IMR-90 (cell line): ENCODE measurements at regions of chr3 and their contacts with region 1.

Region 1: GRCh38 chr3:157532529-157533297 is 29.5 kb upstream of the VEPH1 start:
- DNase-seq: peak; percentile 92
- ATAC-seq: peak; percentile 73
- H3K4me3 ChIP-seq: peak overlapping the region; percentile 27; the same call in 1 of the 2 replicates
- H3K27ac ChIP-seq: peak overlapping the region; percentile 86
- H3K4me1 ChIP-seq: peaks cover 25% of the 10 kb centered on the region
- H3K27me3 ChIP-seq: no peaks in the 10 kb centered on the region
- CTCF ChIP-seq: peak; percentile 86
- POLR2A ChIP-seq: no peak
- RAD21 ChIP-seq: peak; percentile 83

Region 2: DNA sequence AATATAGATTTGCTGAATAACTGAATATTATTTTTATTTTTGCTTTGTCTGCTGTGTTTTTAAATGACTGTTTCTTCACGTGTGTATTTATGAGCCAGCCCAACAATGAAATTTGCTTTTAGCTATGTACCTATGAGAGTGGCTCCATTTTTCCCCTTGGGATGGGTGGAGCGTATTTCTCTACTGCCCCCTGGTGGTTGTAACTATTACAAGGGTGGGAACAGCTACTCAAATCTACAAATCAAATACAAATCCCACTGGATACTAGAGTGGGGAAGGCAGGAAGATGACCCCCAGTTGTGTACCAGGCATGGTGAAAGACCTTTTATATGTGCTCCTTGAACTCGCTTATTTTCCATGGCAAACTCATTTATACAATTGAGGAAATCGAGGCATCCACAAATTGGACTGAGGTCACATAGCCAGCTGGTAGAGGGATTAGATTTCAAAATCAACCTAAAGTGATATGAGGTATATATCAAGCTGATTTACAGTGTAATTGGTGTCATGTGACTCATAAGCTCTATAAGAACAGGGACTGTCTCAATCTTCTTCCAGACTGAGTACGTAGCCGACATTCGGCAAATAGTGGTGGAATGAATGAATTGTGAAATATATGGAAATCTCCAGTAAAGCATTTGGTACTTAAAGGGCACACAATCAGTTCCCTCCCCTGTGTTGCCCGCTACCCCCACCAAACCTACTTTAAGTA is 40.0 kb after region 1 on chr3:
- CTCF ChIA-PET with region 1: interaction called, 65 read pairs
- POLR2A ChIA-PET with region 1: interaction called, 8 read pairs
- dilution Hi-C with region 1: no loop called
- in situ Hi-C with region 1: no loop called
- intact Hi-C with region 1: loop called (anchors 1 kb)
- DNase-seq: peak; percentile 64
- ATAC-seq: peak; percentile 84
- H3K4me3 ChIP-seq: no peak overlapping the region
- H3K27ac ChIP-seq: no peak overlapping the region
- H3K4me1 ChIP-seq: no peaks in the 10 kb centered on the region; the same call in 1 of the 2 replicates
- H3K27me3 ChIP-seq: no peaks in the 10 kb centered on the region; the same call in 1 of the 2 replicates
- CTCF ChIP-seq: peak; percentile 72
- POLR2A ChIP-seq: no peak
- RAD21 ChIP-seq: peak; percentile 66

Region 3: DNA sequence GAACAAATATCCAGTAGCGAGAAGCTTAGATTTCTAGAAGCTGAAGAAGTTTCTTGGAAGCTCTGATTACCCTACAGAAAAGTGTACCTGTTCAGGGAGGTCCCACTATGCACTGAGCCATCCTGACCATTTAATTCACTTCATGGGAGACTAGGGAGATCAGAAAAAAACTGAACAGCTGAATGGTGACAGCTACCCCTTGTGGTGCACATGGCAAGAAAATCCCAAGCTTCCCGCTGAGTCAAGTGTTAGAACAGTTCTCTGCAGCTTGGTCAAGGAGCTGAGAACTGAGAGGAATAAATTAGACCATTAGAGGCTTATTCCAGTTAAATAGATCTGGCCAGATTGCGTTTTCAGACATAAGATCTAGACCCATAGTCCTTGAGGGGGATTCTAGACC is 167.7 kb after region 1 on chr3:
- CTCF ChIA-PET with region 1: no interaction called
- POLR2A ChIA-PET with region 1: no interaction called
- dilution Hi-C with region 1: no loop called
- in situ Hi-C with region 1: no loop called
- intact Hi-C with region 1: no loop called
- DNase-seq: peak; percentile 1
- ATAC-seq: no peak
- H3K4me3 ChIP-seq: no peak overlapping the region
- H3K27ac ChIP-seq: no peak overlapping the region
- H3K4me1 ChIP-seq: no peaks in the 10 kb centered on the region
- H3K27me3 ChIP-seq: peaks cover 4% of the 10 kb centered on the region; the same call in 1 of the 2 replicates
- CTCF ChIP-seq: no peak
- POLR2A ChIP-seq: no peak
- RAD21 ChIP-seq: no peak

Region 4: DNA sequence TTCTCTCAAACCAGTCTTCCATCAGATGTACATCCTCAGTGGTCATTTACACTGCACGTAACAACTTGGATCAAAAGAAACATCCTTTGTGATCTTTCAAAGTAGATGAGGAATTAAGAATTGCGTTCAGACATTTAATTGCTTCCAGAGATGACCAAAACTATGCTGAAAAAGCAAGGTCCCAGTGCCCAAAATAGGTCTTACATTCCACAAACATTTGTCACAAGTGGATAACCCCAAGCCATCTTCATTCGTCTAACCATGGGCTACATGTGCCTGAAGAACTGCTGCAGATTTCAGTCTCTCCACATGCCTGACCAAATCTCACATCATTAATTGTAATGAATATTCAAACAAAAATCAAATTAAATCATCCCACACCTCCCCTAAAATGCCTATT is 299.9 kb after region 1 on chr3:
- CTCF ChIA-PET with region 1: no interaction called
- POLR2A ChIA-PET with region 1: no interaction called
- dilution Hi-C with region 1: no loop called
- in situ Hi-C with region 1: no loop called
- intact Hi-C with region 1: no loop called
- DNase-seq: no peak
- ATAC-seq: no peak
- H3K4me3 ChIP-seq: no peak overlapping the region
- H3K27ac ChIP-seq: no peak overlapping the region
- H3K4me1 ChIP-seq: no peaks in the 10 kb centered on the region
- H3K27me3 ChIP-seq: peaks cover 4% of the 10 kb centered on the region; the same call in 1 of the 2 replicates
- CTCF ChIP-seq: no peak
- POLR2A ChIP-seq: no peak
- RAD21 ChIP-seq: no peak

Region 5: DNA sequence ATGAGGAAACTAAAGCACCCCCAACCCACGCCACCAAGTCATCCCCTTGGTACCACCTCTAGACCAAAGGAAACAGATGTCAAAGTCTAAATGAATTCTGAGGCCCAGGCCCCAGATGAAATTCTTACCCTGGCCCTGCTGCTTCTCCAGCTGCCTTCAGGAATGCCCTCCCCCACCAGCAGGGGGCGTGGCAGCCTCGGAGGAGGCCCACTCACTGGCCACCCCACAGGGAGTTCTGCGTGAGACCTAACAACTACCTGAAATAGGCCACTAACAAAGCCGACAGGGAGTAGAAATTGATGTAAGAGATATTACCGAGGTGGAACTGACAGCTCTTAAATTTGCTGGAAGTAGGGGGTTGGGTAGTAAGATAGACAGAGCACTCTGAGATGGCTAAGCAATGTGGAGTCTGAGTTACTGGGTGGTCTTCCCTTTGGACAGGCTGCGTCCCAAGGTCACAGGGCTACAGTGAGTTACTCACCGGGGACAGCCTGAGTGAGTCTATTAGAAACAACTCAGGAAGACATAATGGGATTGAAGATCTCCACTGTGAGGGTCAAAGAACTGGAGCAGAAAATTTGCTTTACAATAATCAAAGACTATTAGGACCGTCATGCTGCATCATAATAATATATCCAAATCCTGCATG is 332.8 kb after region 1 on chr3:
- CTCF ChIA-PET with region 1: no interaction called
- POLR2A ChIA-PET with region 1: no interaction called
- dilution Hi-C with region 1: no loop called
- in situ Hi-C with region 1: no loop called
- intact Hi-C with region 1: no loop called
- DNase-seq: no peak
- ATAC-seq: no peak
- H3K4me3 ChIP-seq: no peak overlapping the region
- H3K27ac ChIP-seq: no peak overlapping the region
- H3K4me1 ChIP-seq: no peaks in the 10 kb centered on the region
- H3K27me3 ChIP-seq: no peaks in the 10 kb centered on the region
- CTCF ChIP-seq: peak; percentile 43
- POLR2A ChIP-seq: no peak
- RAD21 ChIP-seq: peak; percentile 52

Region 6: GRCh38 chr3:157913741-157914150 is 381.0 kb after region 1 on chr3:
- CTCF ChIA-PET with region 1: no interaction called
- POLR2A ChIA-PET with region 1: no interaction called
- dilution Hi-C with region 1: no loop called
- in situ Hi-C with region 1: no loop called
- intact Hi-C with region 1: loop called (anchors 2 kb)
- DNase-seq: peak; percentile 15
- ATAC-seq: peak; percentile 54
- H3K4me3 ChIP-seq: no peak overlapping the region
- H3K27ac ChIP-seq: peak overlapping the region; percentile 72; the same call in 1 of the 2 replicates
- H3K4me1 ChIP-seq: peaks cover 7% of the 10 kb centered on the region
- H3K27me3 ChIP-seq: no peaks in the 10 kb centered on the region
- CTCF ChIP-seq: no peak
- POLR2A ChIP-seq: no peak
- RAD21 ChIP-seq: no peak

Region 7: GRCh38 chr3:158109804-158110657 is 577.3 kb after region 1 on chr3 and contains the start of gene RSRC1:
- CTCF ChIA-PET with region 1: no interaction called
- POLR2A ChIA-PET with region 1: interaction called, 12 read pairs
- dilution Hi-C with region 1: no loop called
- in situ Hi-C with region 1: no loop called
- intact Hi-C with region 1: loop called (anchors 5 kb)
- DNase-seq: peak; percentile 89
- ATAC-seq: peak; percentile 78
- H3K4me3 ChIP-seq: peak within 1 kb of the TSS; percentile 85
- H3K27ac ChIP-seq: peak within 1 kb of the TSS; percentile 78
- H3K4me1 ChIP-seq: peaks cover 2% of the 10 kb centered on the region; the same call in 1 of the 2 replicates
- H3K27me3 ChIP-seq: peaks cover 33% of the 10 kb centered on the region
- CTCF ChIP-seq: no peak
- POLR2A ChIP-seq: peak; percentile 50; the same call in 1 of the 2 replicates
- RAD21 ChIP-seq: peak; percentile 13; the same call in 1 of the 2 replicates
- total RNA-seq, gene RSRC1: 41.8 and 71.7 TPM in 2 replicates

Region 8: DNA sequence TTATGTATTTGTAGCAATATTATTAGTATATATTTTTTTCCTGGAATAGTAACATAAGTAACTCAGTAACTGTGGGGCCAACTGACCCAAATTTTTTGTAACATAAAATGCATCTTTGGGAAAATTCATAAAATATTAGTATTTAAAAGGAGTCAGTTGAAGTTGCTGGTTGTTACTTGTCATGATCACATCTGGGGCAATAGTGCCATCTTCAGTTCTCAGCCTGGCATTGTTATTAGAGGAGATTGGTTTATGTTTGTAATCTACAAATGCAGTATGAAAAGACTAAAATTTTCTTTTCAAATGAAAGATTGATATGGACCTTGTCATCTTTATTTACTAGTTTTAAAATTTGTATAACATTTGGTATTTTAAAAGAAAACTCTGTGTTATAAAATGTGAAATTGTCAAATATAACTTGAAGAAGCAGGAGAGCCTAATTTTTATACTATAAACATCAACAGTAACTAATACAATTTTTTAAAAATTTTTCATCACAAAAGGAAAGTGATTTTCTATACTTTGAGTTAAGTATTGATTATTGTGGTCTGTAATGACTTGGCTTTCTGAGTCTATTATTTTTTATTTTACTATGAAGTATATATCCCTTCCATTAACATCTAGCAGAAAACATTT is 999.5 kb after region 1 on chr3:
- CTCF ChIA-PET with region 1: interaction called, 4 read pairs
- POLR2A ChIA-PET with region 1: no interaction called
- dilution Hi-C with region 1: no loop called
- in situ Hi-C with region 1: no loop called
- intact Hi-C with region 1: loop called (anchors 1 kb)
- DNase-seq: peak; percentile 70
- ATAC-seq: peak; percentile 54
- H3K4me3 ChIP-seq: no peak overlapping the region
- H3K27ac ChIP-seq: no peak overlapping the region
- H3K4me1 ChIP-seq: no peaks in the 10 kb centered on the region
- H3K27me3 ChIP-seq: no peaks in the 10 kb centered on the region
- CTCF ChIP-seq: peak; percentile 70
- POLR2A ChIP-seq: no peak
- RAD21 ChIP-seq: peak; percentile 80